ENCODE measurements at regions of chr9 and their contacts with region 1.

Region 1: GRCh38 chr9:8895861-8896224 is 1096.3 kb upstream of the DMAC1 start:
- DNase-seq: no peak
- H3K4me3 ChIP-seq: no peak overlapping the region
- H3K27ac ChIP-seq: no peak overlapping the region
- H3K4me1 ChIP-seq: peaks cover 0 to 7% (median 0%) of the 10 kb centered on the region in 4 donors
- H3K27me3 ChIP-seq: no peaks in the 10 kb centered on the region
- CTCF ChIP-seq: peak; percentile 47 to 60 (median 53)
- EP300 ChIP-seq: no peak
- POLR2A ChIP-seq: no peak

Region 2: GRCh38 chr9:7570107-7570720 is 1325.6 kb before region 1 on chr9:
- in situ Hi-C with region 1: loop called in 1 of 4 experiments (anchors 25 kb)
- intact Hi-C with region 1: no loop called
- DNase-seq: peak; percentile 60
- H3K4me3 ChIP-seq: no peak overlapping the region
- H3K27ac ChIP-seq: no peak overlapping the region
- H3K4me1 ChIP-seq: no peaks in the 10 kb centered on the region
- H3K27me3 ChIP-seq: no peaks in the 10 kb centered on the region
- CTCF ChIP-seq: peak; percentile 67 to 83 (median 75)
- EP300 ChIP-seq: no peak
- POLR2A ChIP-seq: no peak

Region 3: DNA sequence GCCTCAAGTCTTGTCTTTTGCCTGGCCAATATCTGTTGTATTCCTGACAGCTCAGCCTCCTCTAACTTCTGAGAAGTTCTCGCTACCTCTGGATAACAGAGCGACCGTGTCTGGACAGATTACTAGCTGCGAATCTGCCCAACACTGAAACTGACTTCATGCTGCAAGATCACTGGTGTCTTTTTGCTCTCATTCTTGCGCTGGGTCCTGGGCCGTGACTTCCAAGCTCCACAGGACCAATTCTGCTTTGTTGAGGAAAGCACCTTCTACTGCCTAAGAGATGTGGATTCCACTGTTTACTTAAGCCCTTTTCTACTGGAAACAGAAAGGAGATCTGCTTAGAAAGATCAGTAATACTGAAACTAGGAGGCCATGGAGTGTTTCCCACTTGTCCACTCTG is 117.5 kb before region 1 on chr9:
- in situ Hi-C with region 1: no loop called
- intact Hi-C with region 1: no loop called
- DNase-seq: no peak
- H3K4me3 ChIP-seq: no peak overlapping the region
- H3K27ac ChIP-seq: no peak overlapping the region
- H3K4me1 ChIP-seq: no peaks in the 10 kb centered on the region
- H3K27me3 ChIP-seq: no peaks in the 10 kb centered on the region
- CTCF ChIP-seq: no peak
- EP300 ChIP-seq: no peak
- POLR2A ChIP-seq: no peak

Measured in transverse colon (tissue), 4 donors.